Heart left ventricle (tissue), 16 donors: ENCODE measurements at regions of chr6 and their contacts with region 1.

Region 1: DNA sequence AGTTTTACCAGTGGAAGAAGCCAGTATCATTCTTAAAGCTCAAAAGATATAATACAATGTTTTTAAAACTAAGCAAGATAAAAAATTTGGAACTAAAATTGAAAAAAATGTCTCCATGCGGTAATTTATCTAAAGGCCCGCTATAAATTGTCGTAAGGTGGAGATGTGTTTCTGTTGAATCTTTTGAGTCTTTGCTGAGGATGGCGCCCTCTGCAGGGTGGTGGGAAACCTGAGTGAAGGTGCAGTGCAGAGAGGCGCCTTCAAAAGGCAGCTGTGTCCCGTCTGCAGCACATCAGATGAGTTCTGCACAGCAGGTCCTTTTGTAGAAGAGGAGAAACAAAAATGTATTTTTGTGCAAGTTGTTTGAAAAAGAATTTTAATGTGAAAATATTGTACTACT is 29.4 kb upstream of the KIF25 start:
- DNase-seq: no peak
- ATAC-seq: no peak
- H3K4me3 ChIP-seq: no peak overlapping the region
- H3K27ac ChIP-seq: peak overlapping the region in 3 of 12 donors; percentile 74 to 82 (median 80)
- H3K4me1 ChIP-seq: peaks cover 0 to 39% (median 7%) of the 10 kb centered on the region in 12 donors
- H3K27me3 ChIP-seq: no peaks in the 10 kb centered on the region
- CTCF ChIP-seq: peak in 10 of 12 donors; percentile 12 to 50 (median 35)
- POLR2A ChIP-seq: no peak

Region 2: GRCh38 chr6:167949179-167949578 is 18.9 kb before region 1 on chr6:
- intact Hi-C with region 1: loop called in 1 of 10 experiments (anchors 1 kb)
- DNase-seq: no peak
- ATAC-seq: no peak
- H3K4me3 ChIP-seq: no peak overlapping the region
- H3K27ac ChIP-seq: peak overlapping the region in 1 of 12 donors; percentile 5
- H3K4me1 ChIP-seq: peaks cover 0 to 14% (median 0%) of the 10 kb centered on the region in 12 donors
- H3K27me3 ChIP-seq: no peaks in the 10 kb centered on the region
- CTCF ChIP-seq: no peak
- POLR2A ChIP-seq: no peak

Region 3: DNA sequence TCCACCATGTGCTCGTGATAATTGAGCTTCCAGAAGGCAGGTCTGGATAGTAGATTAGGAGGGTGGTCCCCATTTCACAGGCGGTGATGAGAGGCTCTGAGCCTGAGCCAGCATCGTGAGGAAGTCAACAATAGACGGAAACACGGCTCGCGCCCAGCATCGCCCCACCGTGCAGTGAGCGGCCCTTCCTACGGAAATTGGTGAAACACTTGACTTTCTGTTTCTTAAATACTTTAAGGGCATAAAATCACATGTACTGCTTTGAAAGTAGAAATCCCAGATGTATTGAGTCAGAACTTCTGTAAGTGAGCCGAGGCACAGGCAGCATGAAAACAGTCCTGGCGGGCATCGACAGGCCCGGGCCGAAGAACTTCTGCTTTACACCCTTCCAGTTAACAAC is 25.1 kb after region 1 on chr6:
- intact Hi-C with region 1: loop called in 1 of 10 experiments (anchors 1 kb)
- DNase-seq: peak; percentile 75 to 80 (median 79)
- ATAC-seq: peak; percentile 75 to 97 (median 84)
- H3K4me3 ChIP-seq: no peak overlapping the region
- H3K27ac ChIP-seq: peak overlapping the region in 10 of 12 donors; percentile 46 to 86 (median 72)
- H3K4me1 ChIP-seq: peaks cover 0 to 23% (median 5%) of the 10 kb centered on the region in 12 donors
- H3K27me3 ChIP-seq: peaks cover 0 to 6% (median 0%) of the 10 kb centered on the region in 9 donors
- CTCF ChIP-seq: no peak
- POLR2A ChIP-seq: no peak

Region 4: GRCh38 chr6:168016721-168017525 is 48.8 kb after region 1 on chr6:
- intact Hi-C with region 1: no loop called
- DNase-seq: peak in 1 of 5 donors; percentile 9
- ATAC-seq: peak in 1 of 4 donors; percentile 26
- H3K4me3 ChIP-seq: no peak overlapping the region
- H3K27ac ChIP-seq: no peak overlapping the region
- H3K4me1 ChIP-seq: peaks cover 0 to 30% (median 6%) of the 10 kb centered on the region in 12 donors
- H3K27me3 ChIP-seq: no peaks in the 10 kb centered on the region
- CTCF ChIP-seq: no peak
- POLR2A ChIP-seq: no peak